Right ventricle myocardium inferior (tissue), 1 donor: ENCODE measurements at regions of chr16 and their contacts with region 1.

Region 1: DNA sequence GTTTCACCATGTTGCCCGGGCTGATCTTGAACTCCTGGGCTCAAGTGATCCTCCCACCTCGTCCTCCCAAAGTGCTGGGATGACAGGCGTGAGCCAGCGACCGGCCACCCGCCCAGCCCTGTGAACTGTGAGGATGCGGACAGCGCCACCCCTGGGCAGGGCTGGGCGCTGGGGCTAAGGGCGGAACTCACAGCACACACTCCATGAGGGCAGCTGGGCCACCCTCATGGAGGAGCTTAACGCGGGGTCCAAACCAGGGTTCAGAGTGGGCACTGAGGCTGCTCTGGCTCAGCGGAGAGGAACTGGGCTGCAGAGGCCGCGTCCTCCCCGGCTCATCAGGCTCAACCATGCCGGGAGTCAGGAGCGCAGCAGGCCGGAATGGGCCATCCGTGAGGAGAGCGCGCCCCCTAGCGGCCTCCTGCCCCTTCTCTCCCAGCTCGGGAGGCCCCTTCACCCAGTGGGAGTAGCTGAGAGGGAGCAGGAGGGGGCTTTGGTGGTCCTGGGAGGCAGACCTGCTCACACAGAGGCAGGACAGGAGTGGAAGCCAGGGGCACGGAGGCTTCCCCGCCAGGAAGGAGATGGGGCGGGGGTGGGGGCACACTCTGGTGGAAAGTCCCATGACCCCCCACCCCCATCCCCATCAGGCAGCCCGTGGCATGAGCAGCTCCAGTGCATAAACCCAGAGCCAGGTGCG is 13.8 kb downstream of the CORO7 start:
- DNase-seq: peak; percentile 92
- ATAC-seq: peak; percentile 93

Region 2: DNA sequence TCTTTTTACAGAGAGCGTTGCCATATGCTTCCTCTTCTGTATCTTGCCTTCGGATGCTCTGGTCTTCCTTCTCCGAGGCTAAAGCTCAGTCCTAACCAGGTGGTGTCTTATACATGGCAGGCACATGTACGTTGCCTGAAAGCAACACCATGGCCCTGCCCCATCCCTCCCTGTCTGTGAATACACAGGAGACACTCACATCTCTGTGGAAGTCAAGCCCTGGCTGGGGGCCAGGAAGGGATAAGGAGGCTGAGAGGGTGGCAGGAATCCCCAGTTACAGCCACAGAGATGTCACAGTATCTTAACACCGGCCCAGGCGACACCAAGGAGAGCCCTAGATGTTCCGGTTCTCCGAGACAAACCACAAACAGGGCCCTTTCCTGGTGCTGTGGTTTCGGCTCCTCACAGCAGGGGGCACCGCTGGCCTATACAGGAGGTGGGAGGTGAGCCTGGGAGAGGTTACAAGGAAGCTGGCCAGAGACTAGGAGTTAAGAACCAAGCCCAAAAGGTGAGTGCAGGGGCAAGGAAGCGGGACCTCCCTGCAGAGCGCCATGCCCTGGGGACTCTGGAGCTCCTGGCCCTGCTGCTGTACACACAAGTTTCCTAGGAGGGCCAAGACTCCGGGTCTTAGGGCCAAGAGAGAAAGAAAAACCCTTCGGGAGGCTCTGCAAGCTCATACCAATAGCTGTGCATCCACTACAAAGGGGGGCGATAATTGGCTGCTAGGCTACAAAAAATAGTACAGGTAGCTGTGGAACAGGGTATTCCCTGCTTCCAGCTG is 202.4 kb before region 1 on chr16:
- intact Hi-C with region 1: loop called (anchors 10 kb)
- DNase-seq: no peak
- ATAC-seq: peak; percentile 79

Region 3: DNA sequence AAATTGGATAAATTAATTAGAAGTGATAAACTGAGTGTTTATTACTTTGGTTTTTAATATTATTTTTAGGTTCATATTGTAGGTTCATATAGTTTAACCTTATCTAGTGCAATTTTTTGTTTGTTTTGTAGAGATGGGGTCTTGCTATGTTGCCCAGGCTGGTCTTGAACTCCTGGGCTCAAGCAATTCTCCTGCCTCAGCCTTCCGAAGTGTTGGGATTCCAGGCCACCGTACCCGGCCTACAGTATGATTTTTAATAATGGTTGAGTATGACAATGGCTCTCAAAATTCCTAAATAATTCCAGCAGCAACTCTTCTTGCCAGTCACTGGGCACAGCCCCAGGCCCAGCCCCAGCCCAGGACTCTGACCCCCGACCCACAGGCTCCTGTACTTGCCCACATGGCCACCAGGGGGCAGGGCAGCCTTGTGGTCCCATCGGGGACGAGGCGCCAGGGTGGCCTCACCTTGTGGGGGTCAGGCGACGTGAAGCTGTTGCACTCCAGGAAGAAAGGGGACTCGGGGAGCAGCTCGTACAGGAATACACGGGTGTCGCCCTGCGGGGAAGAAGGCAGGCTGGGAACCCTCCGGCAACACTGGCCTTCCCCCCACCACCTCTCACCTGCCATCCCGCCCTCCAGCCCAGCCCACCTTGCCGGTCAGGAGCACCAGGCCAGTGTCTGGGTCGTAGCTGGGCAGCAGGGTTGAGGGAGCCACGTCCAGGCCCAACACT is 43.6 kb before region 1 on chr16:
- intact Hi-C with region 1: loop called (anchors 1 kb)
- DNase-seq: peak; percentile 86
- ATAC-seq: peak; percentile 67